Gastrocnemius medialis (tissue), 4 donors: ENCODE measurements at regions of chr10 and their contacts with region 1.

Region 1: DNA sequence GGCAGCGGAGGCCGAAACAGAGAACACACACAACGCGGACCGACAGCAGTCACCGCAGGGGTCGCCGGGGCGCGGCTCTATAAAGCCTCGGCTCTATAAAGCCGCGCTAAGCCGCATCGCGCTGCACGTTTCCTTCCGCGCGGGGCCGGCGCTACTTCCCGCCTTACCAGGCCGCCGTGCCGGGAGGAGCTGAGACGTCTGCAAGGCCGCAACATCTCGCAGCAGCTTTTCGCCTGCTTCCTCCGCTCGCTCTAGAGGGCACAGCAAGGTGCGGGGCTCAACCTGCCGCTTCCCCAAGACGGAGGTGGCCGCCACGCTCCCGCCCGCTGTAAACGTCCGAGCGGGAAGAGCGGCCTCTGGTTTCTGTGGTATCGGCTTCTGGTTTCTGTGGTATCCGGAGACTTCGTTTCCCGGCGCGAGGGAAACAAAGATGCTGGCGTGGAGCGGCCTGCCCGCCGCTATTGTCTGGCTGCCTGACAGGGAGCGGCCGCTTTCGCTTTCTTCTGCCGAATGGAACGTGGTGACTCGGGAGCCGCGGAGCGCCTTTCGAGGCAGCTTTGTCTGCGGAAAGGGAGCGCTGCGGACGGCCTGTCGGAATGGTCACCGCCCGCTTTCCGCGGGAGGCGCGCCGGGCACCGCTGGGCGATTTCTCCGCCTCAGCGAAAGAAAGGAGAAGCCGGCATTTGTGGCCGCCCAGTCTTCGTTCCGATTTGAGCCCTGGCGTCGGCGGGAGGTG is 91.8 kb downstream of the SPAG6 start:
- DNase-seq: peak; percentile 69 to 86
- ATAC-seq: peak; percentile 79 to 89
- H3K4me3 ChIP-seq: peak overlapping the region; percentile 70 to 95 (median 78)
- H3K27ac ChIP-seq: peak overlapping the region; percentile 86 to 95 (median 86)
- H3K4me1 ChIP-seq: peaks cover 12 to 19% of the 10 kb centered on the region in 2 donors
- H3K27me3 ChIP-seq: no peaks in the 10 kb centered on the region
- CTCF ChIP-seq: no peak
- POLR2A ChIP-seq: peak; percentile 71 to 76

Region 2: DNA sequence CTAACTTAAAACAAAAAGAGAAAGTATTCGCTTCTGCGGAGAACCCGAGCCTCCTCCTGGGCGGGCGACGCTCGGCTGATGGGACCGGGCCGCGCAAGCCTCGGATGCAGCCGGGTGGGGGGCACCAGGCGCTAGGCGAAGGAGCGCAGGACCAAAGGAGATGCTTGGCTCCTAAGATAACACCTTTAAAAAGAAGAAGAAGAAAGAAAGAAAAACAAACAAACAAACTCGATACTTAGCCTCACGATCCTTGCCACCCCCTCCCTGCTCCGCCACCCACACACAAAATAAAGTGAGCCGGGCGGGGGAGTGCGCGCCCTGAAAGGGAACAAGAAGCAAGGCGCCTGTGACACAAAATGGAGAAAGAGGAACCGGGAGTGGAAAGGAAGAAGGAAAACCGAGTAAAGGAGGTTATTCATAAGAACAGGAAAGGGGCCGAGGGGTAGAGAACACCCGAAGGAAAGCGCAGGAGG is 185.3 kb before region 1 on chr10:
- in situ Hi-C with region 1: loop called in 1 of 4 experiments (anchors 25 kb)
- intact Hi-C with region 1: loop called (anchors 2 kb)
- DNase-seq: peak; percentile 16 to 35
- ATAC-seq: peak; percentile 68 to 74
- H3K4me3 ChIP-seq: peak overlapping the region; percentile 72 to 84 (median 80)
- H3K27ac ChIP-seq: peak overlapping the region; percentile 84 to 87 (median 86)
- H3K4me1 ChIP-seq: peaks cover 7 to 9% of the 10 kb centered on the region in 2 donors
- H3K27me3 ChIP-seq: no peaks in the 10 kb centered on the region
- CTCF ChIP-seq: no peak
- POLR2A ChIP-seq: no peak

Region 3: DNA sequence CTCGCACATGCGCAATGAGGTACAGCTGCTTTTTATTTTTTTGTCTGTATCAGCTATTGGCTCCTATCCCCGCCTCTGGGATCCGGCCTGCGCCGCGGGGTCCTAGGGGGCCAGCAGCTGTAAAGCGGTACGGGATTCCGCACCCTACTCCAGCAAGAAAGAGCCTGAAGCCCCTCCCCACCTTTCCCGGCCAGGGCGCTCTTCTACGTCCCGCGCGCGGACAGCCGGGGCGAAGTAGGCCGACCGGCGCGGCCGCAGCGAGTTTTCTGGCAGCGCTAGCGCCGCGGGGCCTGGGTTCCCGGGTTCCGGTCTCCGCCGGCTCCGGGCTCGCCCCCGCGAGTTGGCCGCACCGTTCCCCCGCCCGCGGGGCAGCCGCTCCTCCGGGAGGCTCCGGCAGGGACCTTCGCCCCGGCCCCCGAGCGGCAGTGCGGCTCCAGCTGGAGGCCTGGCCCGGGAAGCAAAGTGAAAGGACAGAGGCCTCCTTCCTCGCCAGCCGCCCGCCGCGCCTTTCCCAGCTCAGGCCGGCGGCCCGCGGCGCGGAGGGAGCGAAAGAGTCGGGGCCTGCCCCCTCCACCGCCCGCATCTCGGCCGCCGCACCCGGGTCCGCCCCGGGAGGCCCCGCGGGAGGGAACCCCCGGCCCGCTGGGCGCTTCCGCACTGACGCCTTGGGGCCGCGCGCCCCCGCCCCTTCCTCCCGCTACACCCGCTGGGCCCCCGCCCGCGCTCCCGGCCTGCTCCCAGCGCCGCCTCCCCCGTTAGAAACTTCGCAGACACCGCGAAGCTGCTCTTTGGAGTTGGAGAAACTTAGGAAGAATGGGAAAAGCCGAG is 96.5 kb before region 1 on chr10:
- in situ Hi-C with region 1: no loop called
- intact Hi-C with region 1: loop called (anchors 2 kb)
- DNase-seq: peak in 1 of 2 donors; percentile 52
- ATAC-seq: peak; percentile 79 to 80
- H3K4me3 ChIP-seq: peak overlapping the region; percentile 73 to 85 (median 76)
- H3K27ac ChIP-seq: peak overlapping the region; percentile 84 to 89 (median 86)
- H3K4me1 ChIP-seq: peaks cover 13 to 25% of the 10 kb centered on the region in 2 donors
- H3K27me3 ChIP-seq: peaks cover 89 to 90% (median 90%) of the 10 kb centered on the region in 3 donors
- CTCF ChIP-seq: peak in 1 of 5 experiments; percentile 7
- POLR2A ChIP-seq: peak; percentile 41 to 46

Region 4: GRCh38 chr10:22515009-22515408 is 78.0 kb after region 1 on chr10:
- in situ Hi-C with region 1: no loop called
- intact Hi-C with region 1: no loop called
- DNase-seq: no peak
- ATAC-seq: no peak
- H3K4me3 ChIP-seq: no peak overlapping the region
- H3K27ac ChIP-seq: no peak overlapping the region
- H3K4me1 ChIP-seq: no peaks in the 10 kb centered on the region
- H3K27me3 ChIP-seq: no peaks in the 10 kb centered on the region
- CTCF ChIP-seq: no peak
- POLR2A ChIP-seq: no peak

Region 5: DNA sequence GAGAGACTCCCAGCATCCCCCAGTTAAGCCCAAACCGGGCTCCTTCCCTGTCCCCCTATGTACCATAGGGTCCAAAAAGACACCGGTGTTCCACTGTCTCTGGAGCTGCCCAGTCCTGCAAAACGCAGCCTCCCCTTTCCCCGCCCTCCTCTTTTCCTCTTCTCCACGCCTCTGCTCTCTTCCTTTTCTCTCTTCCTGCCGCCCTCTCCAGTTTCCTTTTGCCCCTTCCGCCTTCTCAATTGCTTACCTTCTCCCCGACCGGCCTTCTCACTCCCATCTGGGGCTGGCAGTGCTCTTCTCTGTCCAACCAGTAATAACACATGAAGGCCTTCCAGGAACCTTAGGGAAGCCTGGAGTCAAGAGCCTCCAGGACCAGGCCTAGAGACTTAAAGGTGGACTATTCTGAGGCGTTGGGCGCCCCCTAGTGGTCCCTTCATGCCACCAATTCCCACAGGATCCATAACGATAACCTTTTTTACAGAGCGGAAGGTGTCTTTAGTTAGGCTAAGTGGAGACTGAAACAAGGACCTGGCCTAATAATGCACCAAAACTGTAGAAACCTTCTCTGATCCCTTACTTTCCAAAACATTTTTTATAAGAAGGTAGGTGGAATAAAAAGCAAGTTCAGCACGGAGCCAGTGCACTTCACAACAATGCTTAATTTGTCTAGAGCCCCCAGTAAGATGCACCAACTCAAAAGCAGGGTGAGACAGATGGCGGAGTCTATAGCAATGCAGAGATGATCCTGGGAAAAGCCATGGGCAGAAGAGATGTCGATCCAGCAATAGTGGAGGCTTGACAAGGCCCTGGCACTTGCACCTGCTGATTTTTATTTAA is 631.1 kb after region 1 on chr10:
- in situ Hi-C with region 1: no loop called
- intact Hi-C with region 1: loop called (anchors 10 kb)
- DNase-seq: peak; percentile 20 to 46
- ATAC-seq: peak; percentile 49 to 62
- H3K4me3 ChIP-seq: no peak overlapping the region
- H3K27ac ChIP-seq: no peak overlapping the region
- H3K4me1 ChIP-seq: peaks cover 22 to 32% of the 10 kb centered on the region in 2 donors
- H3K27me3 ChIP-seq: no peaks in the 10 kb centered on the region
- CTCF ChIP-seq: peak in 4 of 5 experiments; percentile 60 to 82 (median 70)
- POLR2A ChIP-seq: no peak